Lower leg skin (tissue), 4 donors: ENCODE measurements at regions of chr4 and their contacts with region 1.

Region 1: GRCh38 chr4:156660465-156660864 is 311.1 kb downstream of the PDGFC start:
- DNase-seq: no peak
- H3K4me3 ChIP-seq: no peak overlapping the region
- CTCF ChIP-seq: no peak
- POLR2A ChIP-seq: no peak

Region 2: GRCh38 chr4:156459584-156459983 is 200.9 kb before region 1 on chr4:
- intact Hi-C with region 1: no loop called
- DNase-seq: no peak
- H3K4me3 ChIP-seq: no peak overlapping the region
- CTCF ChIP-seq: no peak
- POLR2A ChIP-seq: no peak

Region 3: DNA sequence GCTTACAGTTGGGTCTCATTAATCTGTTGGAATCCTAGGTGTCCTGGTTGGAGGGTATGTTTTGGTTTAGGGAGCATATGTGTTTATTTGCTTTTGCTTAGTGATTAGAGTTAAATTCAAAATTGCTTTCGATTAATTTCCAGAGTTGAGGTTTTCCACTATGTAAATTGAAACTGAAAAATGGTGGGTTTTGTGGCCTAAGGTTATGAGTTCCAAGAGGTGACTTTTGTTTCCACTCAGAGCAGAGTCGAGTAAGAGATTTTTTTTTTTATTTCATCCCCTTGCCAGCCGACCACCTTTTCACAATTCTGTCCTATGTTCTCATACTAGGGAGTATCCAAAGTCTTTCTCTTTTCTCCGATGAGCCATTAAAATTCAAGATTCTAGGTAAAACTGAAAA is 627.0 kb after region 1 on chr4:
- intact Hi-C with region 1: loop called (anchors 5 kb)
- DNase-seq: no peak
- H3K4me3 ChIP-seq: no peak overlapping the region
- CTCF ChIP-seq: no peak
- POLR2A ChIP-seq: no peak